ENCODE measurements at regions of chr12 and their contacts with region 1.

Region 1: GRCh38 chr12:108691175-108691997 is 39.9 kb downstream of the CORO1C start:
- DNase-seq: peak; percentile 95
- ATAC-seq: peak; percentile 81
- H3K4me3 Mint-ChIP-seq: peak overlapping the region; percentile 63
- H3K27ac Mint-ChIP-seq: peak overlapping the region; percentile 86
- H3K4me1 Mint-ChIP-seq: peaks cover 68% of the 10 kb centered on the region
- H3K27me3 Mint-ChIP-seq: no peaks in the 10 kb centered on the region
- CTCF ChIP-seq: peak; percentile 41

Region 2: DNA sequence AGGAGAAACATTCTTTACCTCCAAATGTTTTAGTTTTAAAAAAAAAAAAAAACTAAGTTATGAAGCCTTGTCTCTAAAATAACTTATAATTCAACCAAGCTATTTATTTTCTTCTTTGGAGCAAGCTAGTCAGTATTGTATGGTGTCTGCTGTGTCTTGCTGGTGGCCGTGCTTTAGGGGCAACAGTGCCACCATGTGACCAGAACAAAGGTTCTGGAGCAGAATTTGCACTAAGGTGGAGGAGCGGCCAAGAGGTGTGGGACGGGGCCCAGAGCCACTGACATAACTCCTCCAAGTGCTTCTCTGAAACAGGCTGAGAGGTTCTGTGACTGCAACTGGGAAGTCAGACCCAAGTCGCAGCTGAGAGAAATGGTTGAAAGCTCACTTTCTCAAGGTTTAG is 171.8 kb before region 1 on chr12:
- CTCF ChIA-PET with region 1: no interaction called
- POLR2A ChIA-PET with region 1: no interaction called
- intact Hi-C with region 1: no loop called
- DNase-seq: no peak
- ATAC-seq: no peak
- H3K4me3 Mint-ChIP-seq: no peak overlapping the region
- H3K27ac Mint-ChIP-seq: peak overlapping the region; percentile 38
- H3K4me1 Mint-ChIP-seq: peaks cover 15% of the 10 kb centered on the region
- H3K27me3 Mint-ChIP-seq: no peaks in the 10 kb centered on the region
- CTCF ChIP-seq: no peak

Region 3: DNA sequence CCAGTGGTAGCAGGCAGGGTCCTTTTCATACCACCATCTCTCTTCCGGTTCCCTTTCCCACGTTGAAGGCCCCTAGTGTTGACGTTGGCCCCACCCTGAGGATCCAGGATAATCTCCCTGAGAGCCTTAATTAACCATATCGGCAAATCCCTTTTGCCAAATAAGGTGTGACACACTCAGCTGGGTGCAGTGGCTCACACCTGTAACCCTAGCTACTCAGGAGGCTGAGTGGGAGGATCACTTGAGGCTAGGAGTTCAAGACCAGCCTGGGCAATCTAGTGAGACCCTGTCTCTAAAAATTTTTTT is 90.7 kb before region 1 on chr12:
- CTCF ChIA-PET with region 1: no interaction called
- POLR2A ChIA-PET with region 1: no interaction called
- intact Hi-C with region 1: no loop called
- DNase-seq: no peak
- ATAC-seq: no peak
- H3K4me3 Mint-ChIP-seq: no peak overlapping the region
- H3K27ac Mint-ChIP-seq: no peak overlapping the region
- H3K4me1 Mint-ChIP-seq: no peaks in the 10 kb centered on the region
- H3K27me3 Mint-ChIP-seq: peaks cover 1% of the 10 kb centered on the region
- CTCF ChIP-seq: no peak

Region 4: GRCh38 chr12:108649669-108650068 is 41.7 kb before region 1 on chr12:
- CTCF ChIA-PET with region 1: no interaction called
- POLR2A ChIA-PET with region 1: no interaction called
- intact Hi-C with region 1: no loop called
- DNase-seq: no peak
- ATAC-seq: no peak
- H3K4me3 Mint-ChIP-seq: no peak overlapping the region
- H3K27ac Mint-ChIP-seq: no peak overlapping the region
- H3K4me1 Mint-ChIP-seq: peaks cover 37% of the 10 kb centered on the region
- H3K27me3 Mint-ChIP-seq: no peaks in the 10 kb centered on the region
- CTCF ChIP-seq: no peak

Region 5: DNA sequence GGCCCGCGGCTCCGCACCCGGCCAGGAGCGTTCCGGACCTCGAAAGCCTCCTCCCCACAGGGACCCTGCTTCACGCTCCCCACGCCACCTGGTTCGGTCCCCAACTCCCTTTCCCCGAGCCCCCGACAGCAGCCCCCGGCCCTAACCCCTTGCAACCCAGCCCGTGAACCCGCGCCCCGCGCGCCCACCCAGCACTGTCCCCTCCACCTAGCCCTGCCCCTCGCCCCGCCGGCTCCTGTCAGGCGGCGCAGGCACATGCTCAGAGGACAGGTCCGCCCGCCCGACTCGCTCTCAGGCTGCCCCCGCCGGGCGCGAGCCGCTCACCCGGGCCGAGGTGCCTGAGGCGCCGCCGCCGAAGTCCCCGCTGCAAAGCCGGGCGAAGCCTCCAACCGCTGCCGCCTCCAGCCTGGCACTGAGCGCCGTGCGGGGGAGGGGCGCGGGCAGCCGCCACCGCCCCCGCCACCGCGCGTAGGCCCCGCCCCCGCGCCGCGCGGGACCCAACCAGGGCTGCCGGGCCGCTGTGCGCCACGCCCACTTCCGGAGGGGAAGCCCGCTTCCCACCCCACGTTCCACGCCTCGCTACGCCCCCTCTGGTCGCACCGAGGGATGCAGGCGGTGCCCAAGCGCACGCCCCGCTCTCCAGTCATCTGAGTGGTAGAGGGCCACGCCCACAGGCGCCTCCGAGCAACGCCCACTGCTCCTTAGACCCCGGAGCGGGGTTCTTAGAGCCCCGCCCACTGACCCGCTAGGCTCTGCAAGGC is 39.9 kb after region 1 on chr12 and contains the start of gene CORO1C:
- CTCF ChIA-PET with region 1: interaction called, 4 read pairs
- POLR2A ChIA-PET with region 1: interaction called, 10 read pairs
- intact Hi-C with region 1: loop called (anchors 5 kb)
- DNase-seq: peak; percentile 97
- ATAC-seq: peak; percentile 87
- H3K4me3 Mint-ChIP-seq: peak within 1 kb of the TSS; percentile 92
- H3K27ac Mint-ChIP-seq: peak within 1 kb of the TSS; percentile 93
- H3K4me1 Mint-ChIP-seq: peaks cover 32% of the 10 kb centered on the region
- H3K27me3 Mint-ChIP-seq: no peaks in the 10 kb centered on the region
- CTCF ChIP-seq: peak; percentile 86
- total RNA-seq, gene CORO1C: 90.1 to 98.9 TPM

Measured in activated CD8-positive, alpha-beta T cell treated with anti-CD3 and anti-CD28 coated beads for 36 hours (primary cell).